ENCODE measurements at regions of chrX and their contacts with region 1.

Region 1: DNA sequence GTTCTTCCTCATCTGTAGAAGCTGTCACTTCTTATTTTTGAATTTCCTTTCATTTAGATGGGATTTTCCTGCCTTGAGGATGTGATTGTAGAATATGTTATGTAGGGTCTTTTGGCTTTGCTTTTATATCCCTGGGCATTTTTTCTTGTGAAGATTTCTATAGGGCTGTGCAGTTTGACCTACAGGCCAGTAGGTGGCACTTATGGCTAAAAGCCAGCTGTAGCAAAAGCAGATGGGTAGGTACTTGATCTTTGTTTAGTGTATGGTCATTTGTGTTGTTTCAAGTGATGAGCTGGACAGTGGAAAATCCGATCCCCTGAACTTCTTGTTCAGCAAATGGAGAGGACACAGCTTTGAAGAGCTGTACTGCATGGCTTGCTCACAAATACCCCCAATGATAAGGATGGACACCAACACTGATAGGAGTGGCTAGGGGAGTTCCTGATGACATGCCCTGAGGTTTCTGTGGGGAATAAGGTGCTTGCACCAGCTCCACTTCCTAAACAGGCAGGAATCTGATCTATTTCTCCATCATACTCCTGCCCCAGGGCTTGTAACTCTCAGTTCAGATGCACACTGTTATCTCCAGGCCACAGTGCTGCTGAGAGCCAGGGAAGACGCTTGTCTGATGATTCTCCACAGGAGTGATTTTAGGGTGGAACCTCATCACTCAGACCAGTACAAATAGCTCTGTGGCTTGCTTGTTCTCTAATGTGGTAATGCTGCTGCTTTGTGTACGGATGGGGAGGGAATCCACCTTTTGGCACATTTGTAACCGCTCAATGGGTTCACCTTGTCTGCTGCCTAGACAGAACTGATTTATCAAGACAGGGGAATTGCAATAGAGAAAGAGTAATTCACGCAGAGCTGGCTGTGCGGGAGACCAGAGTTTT is 417.1 kb upstream of the MAGEB16 start:
- DNase-seq: peak; percentile 55
- H3K4me3 ChIP-seq: no peak overlapping the region
- H3K27ac ChIP-seq: no peak overlapping the region
- H3K4me1 ChIP-seq: no peaks in the 10 kb centered on the region
- H3K27me3 ChIP-seq: no peaks in the 10 kb centered on the region
- CTCF ChIP-seq: peak; percentile 82

Region 2: GRCh38 chrX:35244796-35245508 is 136.1 kb before region 1 on chrX:
- CTCF ChIA-PET with region 1: no interaction called
- POLR2A ChIA-PET with region 1: no interaction called
- intact Hi-C with region 1: no loop called
- DNase-seq: no peak
- H3K4me3 ChIP-seq: no peak overlapping the region
- H3K27ac ChIP-seq: no peak overlapping the region
- H3K4me1 ChIP-seq: no peaks in the 10 kb centered on the region
- H3K27me3 ChIP-seq: no peaks in the 10 kb centered on the region
- CTCF ChIP-seq: no peak

Region 3: GRCh38 chrX:35726176-35726575 is 345.1 kb after region 1 on chrX:
- CTCF ChIA-PET with region 1: no interaction called
- POLR2A ChIA-PET with region 1: no interaction called
- intact Hi-C with region 1: loop called (anchors 10 kb)
- DNase-seq: peak; percentile 53
- H3K4me3 ChIP-seq: no peak overlapping the region
- H3K27ac ChIP-seq: no peak overlapping the region
- H3K4me1 ChIP-seq: no peaks in the 10 kb centered on the region
- H3K27me3 ChIP-seq: no peaks in the 10 kb centered on the region
- CTCF ChIP-seq: peak; percentile 54

Region 4: DNA sequence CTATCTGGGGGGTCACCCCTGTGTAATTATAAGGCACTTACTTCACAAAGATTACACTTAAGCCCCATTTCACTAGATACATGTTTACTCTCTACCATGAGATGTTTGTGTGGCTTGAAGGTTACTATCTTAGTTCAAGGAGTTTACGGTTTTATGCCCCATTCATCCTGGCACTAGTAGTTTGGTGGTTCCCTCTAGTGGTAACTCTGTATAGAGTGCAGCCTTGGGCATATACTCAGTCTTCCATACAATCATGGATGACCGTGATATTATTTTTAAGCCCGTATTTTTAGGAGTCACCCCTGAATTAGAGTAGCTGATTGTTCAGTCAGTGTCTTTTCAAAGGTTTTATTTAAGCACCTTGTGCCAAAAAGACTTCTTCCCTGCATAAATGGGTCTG is 1517.2 kb after region 1 on chrX:
- CTCF ChIA-PET with region 1: no interaction called
- POLR2A ChIA-PET with region 1: no interaction called
- intact Hi-C with region 1: loop called (anchors 10 kb)
- DNase-seq: peak; percentile 65
- H3K4me3 ChIP-seq: no peak overlapping the region
- H3K27ac ChIP-seq: no peak overlapping the region
- H3K4me1 ChIP-seq: no peaks in the 10 kb centered on the region
- H3K27me3 ChIP-seq: no peaks in the 10 kb centered on the region
- CTCF ChIP-seq: peak; percentile 87